H1 (cell line): ENCODE measurements at regions of chr3 and their contacts with region 1.

Region 1: GRCh38 chr3:186988806-186989205 is 58.5 kb downstream of the ST6GAL1 start:
- DNase-seq: no peak
- H3K4me3 ChIP-seq: no peak overlapping the region
- H3K27ac ChIP-seq: no peak overlapping the region
- H3K4me1 ChIP-seq: peaks cover 0 to 6% (median 1%) of the 10 kb centered on the region in 4 experiments; a peak in 5 of 7 replicates
- H3K27me3 ChIP-seq: no peaks in the 10 kb centered on the region
- CTCF ChIP-seq: no peak
- EP300 ChIP-seq: no peak
- POLR2A ChIP-seq: no peak
- RAD21 ChIP-seq: no peak

Region 2: GRCh38 chr3:186760141-186760813 is 228.5 kb before region 1 on chr3:
- CTCF ChIA-PET with region 1: no interaction called
- POLR2A ChIA-PET with region 1: no interaction called
- DNase-seq: no peak
- H3K4me3 ChIP-seq: no peak overlapping the region
- H3K27ac ChIP-seq: no peak overlapping the region
- H3K4me1 ChIP-seq: no peaks in the 10 kb centered on the region
- H3K27me3 ChIP-seq: no peaks in the 10 kb centered on the region
- CTCF ChIP-seq: no peak
- EP300 ChIP-seq: no peak
- POLR2A ChIP-seq: no peak
- RAD21 ChIP-seq: no peak

Region 3: DNA sequence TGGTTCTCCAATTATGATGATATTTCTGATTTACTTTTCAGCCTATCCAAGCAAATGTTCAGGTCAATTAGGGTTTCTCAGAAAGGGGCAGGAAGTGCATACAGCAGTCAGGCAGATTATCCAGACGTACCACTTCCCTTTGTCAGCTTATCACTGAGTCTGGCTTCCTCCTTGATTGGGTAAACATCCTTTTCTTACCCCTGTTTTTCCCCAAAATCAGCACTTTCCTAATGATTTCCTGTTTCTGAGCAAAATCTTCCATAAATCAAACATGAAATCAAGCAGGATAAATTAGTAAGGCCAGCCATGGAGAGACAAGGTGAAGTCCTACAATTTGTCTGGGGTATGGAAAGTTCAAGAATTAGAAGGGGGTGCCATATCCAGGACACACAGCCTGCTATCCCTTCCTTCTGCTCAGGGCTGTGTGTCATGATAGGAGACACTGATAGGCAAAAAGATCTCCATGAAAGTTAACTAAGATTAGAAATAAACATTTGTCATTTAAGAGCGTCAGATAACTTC is 117.3 kb before region 1 on chr3:
- CTCF ChIA-PET with region 1: no interaction called
- POLR2A ChIA-PET with region 1: no interaction called
- DNase-seq: no peak
- H3K4me3 ChIP-seq: no peak overlapping the region
- H3K27ac ChIP-seq: no peak overlapping the region
- H3K4me1 ChIP-seq: no peaks in the 10 kb centered on the region
- H3K27me3 ChIP-seq: peaks cover 0 to 1% (median 0%) of the 10 kb centered on the region in 4 experiments; a peak in 1 of 7 replicates
- CTCF ChIP-seq: no peak
- EP300 ChIP-seq: no peak
- POLR2A ChIP-seq: no peak
- RAD21 ChIP-seq: no peak

Region 4: DNA sequence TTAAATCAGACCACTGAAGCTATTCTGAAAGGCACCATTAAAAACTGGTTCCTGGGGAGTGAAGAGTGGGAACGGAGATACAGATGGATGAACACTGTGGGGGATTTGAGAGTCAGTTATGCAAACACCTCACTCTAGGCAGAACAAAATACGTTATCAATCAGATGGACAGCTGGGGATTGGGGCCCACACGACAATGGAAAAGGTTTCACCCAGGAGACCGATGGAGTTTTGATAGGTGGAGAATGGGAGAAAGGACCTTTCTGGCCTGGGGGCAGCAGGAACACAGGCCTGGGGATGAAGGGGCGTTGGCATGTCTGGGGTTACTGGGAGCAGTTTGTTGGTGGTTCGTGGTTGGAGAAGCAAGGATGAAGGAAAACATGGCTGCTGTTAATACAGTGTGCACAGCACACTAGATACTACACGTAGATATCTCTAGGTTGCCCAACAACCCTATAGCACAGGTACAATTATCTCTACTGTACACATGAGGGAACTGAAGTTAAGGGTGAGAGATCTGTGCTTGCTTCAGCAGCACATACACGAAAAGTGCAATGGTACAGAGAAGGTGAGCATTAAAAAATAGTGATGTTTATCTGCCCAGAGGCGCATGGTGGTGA is 41.9 kb before region 1 on chr3:
- CTCF ChIA-PET with region 1: no interaction called
- POLR2A ChIA-PET with region 1: no interaction called
- DNase-seq: no peak
- H3K4me3 ChIP-seq: no peak overlapping the region
- H3K27ac ChIP-seq: no peak overlapping the region
- H3K4me1 ChIP-seq: peaks cover 0 to 2% (median 2%) of the 10 kb centered on the region in 4 experiments; a peak in 3 of 7 replicates
- H3K27me3 ChIP-seq: no peaks in the 10 kb centered on the region
- CTCF ChIP-seq: no peak
- EP300 ChIP-seq: no peak
- POLR2A ChIP-seq: no peak
- RAD21 ChIP-seq: no peak

Region 5: DNA sequence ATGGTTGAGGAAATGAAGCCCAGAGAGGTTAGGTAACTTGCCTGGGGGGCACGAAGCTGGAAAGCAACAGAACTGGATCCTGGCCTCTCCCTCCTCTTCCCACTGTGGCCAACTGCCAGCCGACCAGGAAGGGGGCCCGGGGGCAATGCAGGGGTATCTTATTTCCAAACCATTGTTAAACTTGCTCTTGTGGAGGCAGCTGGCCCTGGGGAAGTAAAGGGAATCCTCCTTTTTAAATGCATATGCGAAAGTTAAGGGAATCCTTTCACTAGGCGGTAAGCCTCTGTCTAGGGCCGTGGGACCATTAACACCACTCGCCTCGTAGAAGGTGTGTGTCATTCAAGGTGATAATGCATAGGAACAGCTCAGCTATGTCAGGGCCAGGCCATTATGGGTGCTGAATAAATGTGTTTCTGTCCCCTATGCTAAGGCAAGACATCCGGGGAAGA is 10.1 kb after region 1 on chr3:
- CTCF ChIA-PET with region 1: interaction called, 5 read pairs
- POLR2A ChIA-PET with region 1: interaction called, 10 read pairs
- DNase-seq: peak; percentile 76 to 90
- H3K4me3 ChIP-seq: peak overlapping the region in 1 of 4 experiments; percentile 36; a peak in 3 of 8 replicates
- H3K27ac ChIP-seq: peak overlapping the region; percentile 6; the same call in 1 of the 2 replicates
- H3K4me1 ChIP-seq: peaks cover 0 to 17% (median 8%) of the 10 kb centered on the region in 4 experiments; a peak in 5 of 7 replicates
- H3K27me3 ChIP-seq: no peaks in the 10 kb centered on the region
- CTCF ChIP-seq: no peak
- EP300 ChIP-seq: peak in 1 of 2 experiments; percentile 43; a peak in 1 of 3 replicates
- POLR2A ChIP-seq: peak in 1 of 2 experiments; percentile 66; a peak in 2 of 3 replicates
- RAD21 ChIP-seq: no peak